Sciatic nerve (tissue), 2 donors: ENCODE measurements at regions of chr11 and their contacts with region 1.

Region 1: GRCh38 chr11:85011173-85011572 is 616.0 kb downstream of the DLG2 start:
- DNase-seq: no peak
- ATAC-seq: no peak

Region 2: GRCh38 chr11:84855500-84856245 is 155.5 kb before region 1 on chr11:
- intact Hi-C with region 1: no loop called
- DNase-seq: no peak
- ATAC-seq: no peak

Region 3: GRCh38 chr11:84947967-84948580 is 63.1 kb before region 1 on chr11:
- intact Hi-C with region 1: no loop called
- DNase-seq: no peak
- ATAC-seq: no peak

Region 4: DNA sequence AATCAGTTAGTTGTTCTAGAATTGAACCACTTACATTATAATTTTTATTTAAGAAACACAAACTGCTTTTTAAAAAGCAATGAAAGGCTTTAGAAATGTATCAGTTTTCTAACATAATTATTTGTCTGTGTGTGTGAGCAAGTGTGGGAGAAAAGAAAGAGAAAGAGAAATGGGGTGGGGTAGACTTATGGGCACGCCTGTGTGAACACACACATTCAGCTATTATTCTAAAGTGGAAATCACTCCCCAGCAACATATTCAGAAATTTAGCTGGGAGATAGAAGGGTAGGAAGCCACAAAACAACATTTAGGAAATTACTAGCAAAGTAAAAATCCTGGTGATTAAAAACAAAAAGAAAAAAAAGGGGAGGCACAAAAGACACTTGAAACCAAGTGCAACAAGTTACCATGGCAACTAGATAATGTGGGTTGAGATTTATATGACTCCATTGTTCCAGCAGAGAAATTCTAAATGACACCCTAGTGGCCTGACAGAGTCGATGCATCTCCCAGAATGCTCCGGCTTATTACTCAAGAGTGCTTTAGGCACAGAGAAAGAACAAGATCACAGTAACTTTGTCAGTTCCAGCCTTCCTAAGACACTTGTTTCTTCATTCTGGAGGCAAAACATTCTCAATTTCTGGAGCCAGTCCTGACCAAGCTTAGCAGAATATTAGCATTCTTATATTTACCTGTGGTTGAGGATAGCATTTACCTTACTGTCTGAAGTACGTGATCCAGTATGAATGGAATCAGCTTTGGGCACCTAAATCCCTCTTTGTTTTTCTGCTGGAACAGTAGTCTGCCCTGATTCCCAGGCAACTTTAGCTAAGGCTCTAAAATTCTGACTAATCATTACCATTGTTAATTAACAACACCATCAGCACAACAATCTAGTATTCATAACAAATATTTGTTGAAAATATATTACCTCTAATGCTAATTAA is 171.5 kb after region 1 on chr11:
- intact Hi-C with region 1: loop called (anchors 5 kb)
- DNase-seq: no peak
- ATAC-seq: peak; percentile 66

Region 5: DNA sequence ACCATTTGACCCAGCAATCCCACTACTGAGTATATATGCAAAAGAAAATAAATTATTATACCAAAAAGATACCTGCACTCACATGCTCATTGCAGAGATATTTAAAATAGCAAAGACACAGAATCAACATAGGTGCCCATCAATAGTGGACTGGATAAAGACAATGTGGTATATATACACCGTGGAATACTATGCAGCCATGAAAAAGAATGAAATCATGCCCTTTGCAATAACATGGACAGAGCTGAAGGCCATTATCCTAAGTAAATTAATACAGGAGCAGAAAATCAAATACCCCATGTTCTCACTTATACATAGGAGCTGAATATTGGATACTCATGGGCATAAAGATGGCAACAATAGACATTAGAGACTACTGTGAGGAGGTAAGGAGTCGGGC is 547.2 kb after region 1 on chr11:
- intact Hi-C with region 1: no loop called
- DNase-seq: no peak
- ATAC-seq: no peak